H1 (cell line): ENCODE measurements at regions of chr2 and their contacts with region 1.

Region 1: DNA sequence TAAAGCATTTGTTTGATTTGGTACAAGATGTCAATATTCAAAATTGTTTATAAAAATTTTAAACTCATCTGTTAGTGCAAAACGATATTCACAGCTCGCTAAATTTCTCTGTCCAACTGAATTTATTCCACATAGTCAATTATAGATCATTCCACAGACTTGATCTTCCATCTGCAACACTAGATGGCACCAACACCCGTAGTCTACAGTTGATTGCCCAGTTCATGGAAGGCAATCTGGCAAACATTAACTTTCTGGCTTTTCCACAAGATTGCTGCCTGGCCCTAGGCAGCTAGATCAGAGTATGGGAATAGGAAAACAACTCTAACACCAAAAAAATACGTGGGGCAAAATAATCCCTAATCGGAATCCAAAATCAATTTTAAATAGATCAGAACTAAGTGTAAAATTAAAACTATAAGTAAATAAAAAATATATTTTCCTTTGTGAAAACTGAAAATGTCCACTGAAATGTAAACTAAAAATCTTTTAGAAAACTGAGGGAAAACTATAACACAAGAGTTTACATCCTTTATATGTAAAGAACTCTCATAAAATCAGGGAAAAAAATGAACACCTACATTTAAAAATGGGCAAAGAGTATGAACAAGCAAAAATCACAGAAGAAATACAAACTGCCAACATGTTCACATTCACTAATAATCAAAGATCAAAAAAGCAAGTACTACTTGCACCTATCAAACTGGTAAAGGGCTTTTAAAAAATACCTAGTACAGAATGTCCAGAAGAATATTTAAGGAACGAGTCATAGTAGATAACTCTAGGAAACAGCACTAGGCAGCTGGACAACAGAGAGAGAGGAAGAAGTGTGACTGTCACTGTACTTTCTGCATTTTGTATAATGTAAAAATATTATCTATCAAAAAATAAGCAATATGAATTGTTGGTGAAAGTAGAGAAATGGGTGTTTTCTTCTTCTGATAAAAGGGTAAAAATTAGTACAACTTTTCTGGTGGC is 35.0 kb downstream of the RTN4 start:
- DNase-seq: no peak
- H3K4me3 ChIP-seq: no peak overlapping the region
- H3K27ac ChIP-seq: no peak overlapping the region
- H3K4me1 ChIP-seq: peaks cover 0 to 7% (median 3%) of the 10 kb centered on the region in 4 experiments; a peak in 3 of 7 replicates
- H3K27me3 ChIP-seq: no peaks in the 10 kb centered on the region
- CTCF ChIP-seq: peak in 2 of 3 experiments; percentile 60 to 62; a peak in 3 of 4 replicates
- EP300 ChIP-seq: no peak
- POLR2A ChIP-seq: no peak
- RAD21 ChIP-seq: peak; percentile 69 to 82

Region 2: DNA sequence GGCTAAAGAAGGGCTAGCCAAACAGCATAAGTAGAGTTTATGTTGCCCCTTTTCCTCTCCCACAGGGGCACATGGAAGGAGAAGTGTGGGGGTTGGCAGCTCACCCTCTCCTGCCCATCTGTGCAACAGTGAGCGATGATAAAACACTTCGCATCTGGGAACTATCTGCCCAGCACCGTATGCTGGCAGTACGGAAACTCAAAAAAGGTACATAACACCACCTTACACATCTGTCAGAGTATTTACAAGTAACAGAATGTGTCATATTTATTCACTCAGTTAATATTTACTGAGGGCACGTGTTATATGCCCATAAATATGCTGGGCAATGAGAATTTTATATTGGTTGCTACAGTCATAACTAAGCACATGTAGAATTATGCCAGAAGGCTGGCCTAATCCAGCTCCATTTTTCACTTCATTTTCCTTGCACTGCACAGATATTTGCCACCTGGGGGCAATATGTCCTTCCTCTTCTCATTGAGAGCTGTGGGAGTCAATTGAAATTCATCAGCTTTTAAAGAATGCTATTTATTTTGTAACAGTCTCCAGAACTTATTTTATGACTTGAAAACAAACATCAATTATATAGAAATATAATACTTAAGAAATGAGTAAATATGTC is 115.6 kb before region 1 on chr2:
- CTCF ChIA-PET with region 1: interaction called, 13 read pairs
- POLR2A ChIA-PET with region 1: no interaction called
- DNase-seq: no peak
- H3K4me3 ChIP-seq: no peak overlapping the region
- H3K27ac ChIP-seq: no peak overlapping the region
- H3K4me1 ChIP-seq: no peaks in the 10 kb centered on the region
- H3K27me3 ChIP-seq: no peaks in the 10 kb centered on the region
- CTCF ChIP-seq: peak in 2 of 3 experiments; percentile 34; a peak in 2 of 4 replicates
- EP300 ChIP-seq: no peak
- POLR2A ChIP-seq: no peak
- RAD21 ChIP-seq: peak; percentile 66 to 74

Region 3: DNA sequence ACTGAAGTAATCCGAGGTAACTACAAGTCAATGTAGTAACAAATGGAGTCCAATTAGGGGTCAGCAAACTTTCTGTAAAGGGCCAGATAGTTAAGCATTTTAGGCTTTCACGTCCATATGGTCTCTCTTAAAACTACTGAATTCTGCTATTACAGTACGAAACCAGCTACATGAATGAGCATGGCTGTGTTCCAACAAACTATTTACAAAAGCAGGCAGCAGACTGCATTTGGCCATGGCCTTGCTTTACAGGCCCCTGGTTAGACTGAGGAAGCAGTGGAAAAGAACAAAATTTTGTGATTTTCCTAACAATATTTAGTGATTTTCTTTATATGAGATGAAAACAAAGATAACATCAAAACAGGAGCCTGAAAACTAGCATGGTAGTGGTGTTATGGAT is 29.0 kb before region 1 on chr2:
- CTCF ChIA-PET with region 1: no interaction called
- POLR2A ChIA-PET with region 1: no interaction called
- DNase-seq: no peak
- H3K4me3 ChIP-seq: no peak overlapping the region
- H3K27ac ChIP-seq: no peak overlapping the region; the same call in 1 of the 2 replicates
- H3K4me1 ChIP-seq: peaks cover 0 to 5% (median under 1%) of the 10 kb centered on the region in 4 experiments; a peak in 4 of 7 replicates
- H3K27me3 ChIP-seq: no peaks in the 10 kb centered on the region
- CTCF ChIP-seq: no peak
- EP300 ChIP-seq: no peak
- POLR2A ChIP-seq: no peak
- RAD21 ChIP-seq: no peak

Region 4: DNA sequence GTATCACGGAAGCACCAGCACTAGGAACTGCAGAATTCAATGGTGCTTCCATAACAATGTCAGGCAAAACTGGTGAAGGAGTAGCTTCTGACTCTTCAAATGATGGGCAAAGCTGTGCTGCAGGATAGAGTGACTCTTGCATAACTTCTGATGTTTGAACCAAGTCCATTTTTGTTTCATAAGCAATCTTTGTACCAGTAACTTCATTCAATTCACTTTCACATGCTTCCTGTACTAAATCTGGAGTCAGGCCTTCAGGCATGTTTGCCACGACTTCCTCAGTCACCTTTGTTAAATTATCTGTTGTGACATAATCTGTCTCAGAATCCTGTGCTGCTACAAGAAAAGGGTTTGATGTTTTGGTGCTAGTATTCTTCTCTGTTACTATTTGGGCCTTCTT is 11.0 kb after region 1 on chr2:
- CTCF ChIA-PET with region 1: interaction called, 15 read pairs
- POLR2A ChIA-PET with region 1: interaction called, 5 read pairs
- DNase-seq: no peak
- H3K4me3 ChIP-seq: no peak overlapping the region
- H3K27ac ChIP-seq: no peak overlapping the region
- H3K4me1 ChIP-seq: peaks cover 0 to 28% (median 21%) of the 10 kb centered on the region in 4 experiments; a peak in 5 of 7 replicates
- H3K27me3 ChIP-seq: no peaks in the 10 kb centered on the region
- CTCF ChIP-seq: no peak
- EP300 ChIP-seq: no peak
- POLR2A ChIP-seq: no peak
- RAD21 ChIP-seq: no peak

Region 5: DNA sequence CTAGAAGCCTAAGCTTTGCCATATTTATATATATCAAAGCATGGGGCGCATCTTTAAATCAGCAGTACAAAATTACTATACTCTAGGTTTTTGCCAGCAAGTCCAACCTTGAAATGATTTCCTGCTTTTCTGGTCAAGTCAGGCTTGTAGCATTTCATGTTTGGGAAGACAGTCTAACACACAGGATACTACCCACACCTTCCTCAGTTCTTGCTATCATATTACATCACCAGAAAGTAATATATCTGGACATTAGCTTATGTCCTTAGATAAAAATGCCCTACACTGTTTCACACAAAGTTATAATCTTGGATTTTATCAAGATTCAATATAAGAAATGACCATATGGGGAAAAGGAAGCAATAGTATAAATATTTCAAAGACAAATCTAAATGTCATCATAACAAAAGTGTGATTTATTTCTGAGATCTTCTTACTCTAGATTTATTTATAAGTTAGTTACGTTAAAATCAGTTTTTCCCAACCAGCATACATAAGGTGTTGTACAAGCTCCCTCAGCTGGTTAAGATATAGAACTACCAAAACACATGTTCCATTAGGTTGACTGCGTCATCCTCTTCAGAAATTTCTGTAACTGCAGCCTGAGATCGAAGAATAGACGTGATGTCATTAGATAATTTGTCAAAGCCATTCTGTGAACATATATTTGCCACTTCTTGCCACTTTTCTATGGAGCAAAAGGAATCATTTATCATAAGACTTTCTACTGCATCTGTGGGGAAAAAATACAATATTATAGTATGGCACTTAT is 160.2 kb after region 1 on chr2:
- CTCF ChIA-PET with region 1: interaction called, 14 read pairs
- POLR2A ChIA-PET with region 1: no interaction called
- DNase-seq: no peak
- H3K4me3 ChIP-seq: no peak overlapping the region
- H3K27ac ChIP-seq: no peak overlapping the region
- H3K4me1 ChIP-seq: peaks cover 0 to 2% (median 1%) of the 10 kb centered on the region in 4 experiments; a peak in 2 of 7 replicates
- H3K27me3 ChIP-seq: peaks cover 0 to 1% (median 0%) of the 10 kb centered on the region in 4 experiments; a peak in 1 of 7 replicates
- CTCF ChIP-seq: peak in 2 of 3 experiments; percentile 39 to 58; a peak in 2 of 4 replicates
- EP300 ChIP-seq: no peak
- POLR2A ChIP-seq: no peak
- RAD21 ChIP-seq: peak; percentile 81 to 86